ENCODE measurements at regions of chr7 and their contacts with region 1.

Region 1: DNA sequence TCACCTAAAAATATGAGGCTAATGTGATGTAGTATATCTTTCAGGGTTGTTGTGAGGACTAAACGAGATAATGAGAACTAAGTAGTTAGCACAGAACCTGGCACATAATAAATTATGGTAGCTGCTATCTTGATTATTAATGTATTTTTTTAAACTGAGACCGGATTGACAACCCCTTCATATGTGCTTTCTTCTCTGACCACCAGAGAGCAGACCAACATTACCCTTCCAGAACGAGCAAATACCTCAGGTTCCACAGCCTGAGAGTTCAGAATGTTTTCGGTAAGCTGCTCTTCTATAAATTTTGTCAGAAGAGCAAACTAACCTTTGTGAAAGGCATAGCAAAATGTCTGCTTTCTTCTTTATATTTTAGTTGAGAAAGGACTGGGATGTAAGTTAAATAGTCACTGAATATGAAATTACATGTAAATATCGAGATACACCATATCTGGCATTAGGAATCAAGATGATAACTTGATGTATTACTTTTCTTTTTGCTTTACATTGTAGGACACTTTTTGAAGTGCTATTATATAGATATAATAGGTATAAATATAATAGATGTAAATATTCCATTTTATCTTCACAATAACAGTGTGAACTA is 13.6 kb upstream of the BPGM start:
- DNase-seq: peak; percentile 44
- H3K4me3 Mint-ChIP-seq: no peak overlapping the region
- H3K27ac Mint-ChIP-seq: no peak overlapping the region
- H3K4me1 Mint-ChIP-seq: peaks cover 22% of the 10 kb centered on the region
- H3K27me3 Mint-ChIP-seq: peaks cover 2% of the 10 kb centered on the region
- CTCF ChIP-seq: peak; percentile 55

Region 2: DNA sequence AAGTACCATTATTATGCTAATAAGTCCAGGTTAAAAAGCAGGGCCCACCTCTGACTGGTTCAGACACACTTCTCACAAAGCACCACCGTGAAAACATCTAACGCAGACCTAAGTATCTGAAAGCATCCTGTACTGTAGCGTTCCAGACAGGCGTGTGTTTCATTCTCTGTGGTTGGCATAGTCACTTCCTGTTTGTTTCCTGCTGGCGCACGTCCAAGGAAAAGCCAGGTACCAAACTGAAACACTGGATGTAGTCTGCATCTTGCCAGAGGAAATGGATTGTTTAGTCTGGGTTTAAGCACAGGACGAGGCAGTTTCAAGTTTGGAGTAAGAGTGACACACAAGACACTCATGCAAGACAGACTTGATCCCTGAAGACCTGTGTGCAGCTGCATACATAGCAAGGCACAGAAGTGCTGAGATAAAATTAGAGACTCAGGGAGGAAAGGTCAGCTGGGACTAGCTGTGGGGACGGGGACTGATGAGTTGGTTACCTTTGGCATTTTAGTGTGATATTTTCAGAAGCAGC is 36.9 kb after region 1 on chr7:
- CTCF ChIA-PET with region 1: interaction called, 3 read pairs
- intact Hi-C with region 1: loop called (anchors 5 kb)
- DNase-seq: peak; percentile 76
- H3K4me3 Mint-ChIP-seq: peak overlapping the region; percentile 57
- H3K27ac Mint-ChIP-seq: peak overlapping the region; percentile 85
- H3K4me1 Mint-ChIP-seq: peaks cover 12% of the 10 kb centered on the region
- H3K27me3 Mint-ChIP-seq: no peaks in the 10 kb centered on the region
- CTCF ChIP-seq: no peak

Region 3: GRCh38 chr7:134701272-134701671 is 68.2 kb after region 1 on chr7:
- CTCF ChIA-PET with region 1: interaction called, 4 read pairs
- intact Hi-C with region 1: loop called (anchors 1 kb)
- DNase-seq: peak; percentile 29
- H3K4me3 Mint-ChIP-seq: no peak overlapping the region
- H3K27ac Mint-ChIP-seq: no peak overlapping the region
- H3K4me1 Mint-ChIP-seq: no peaks in the 10 kb centered on the region
- H3K27me3 Mint-ChIP-seq: peaks cover 15% of the 10 kb centered on the region
- CTCF ChIP-seq: peak; percentile 53

Region 4: GRCh38 chr7:134778941-134779740 is 146.1 kb after region 1 on chr7 and contains the start of gene CALD1:
- CTCF ChIA-PET with region 1: no interaction called
- intact Hi-C with region 1: no loop called
- DNase-seq: peak; percentile 58
- H3K4me3 Mint-ChIP-seq: peak within 1 kb of the TSS; percentile 68
- H3K27ac Mint-ChIP-seq: no peak within 1 kb of the TSS
- H3K4me1 Mint-ChIP-seq: peaks cover 21% of the 10 kb centered on the region
- H3K27me3 Mint-ChIP-seq: no peaks in the 10 kb centered on the region
- CTCF ChIP-seq: no peak
- total RNA-seq, gene CALD1: 5.5 and 9.3 TPM in 2 replicates

Region 5: DNA sequence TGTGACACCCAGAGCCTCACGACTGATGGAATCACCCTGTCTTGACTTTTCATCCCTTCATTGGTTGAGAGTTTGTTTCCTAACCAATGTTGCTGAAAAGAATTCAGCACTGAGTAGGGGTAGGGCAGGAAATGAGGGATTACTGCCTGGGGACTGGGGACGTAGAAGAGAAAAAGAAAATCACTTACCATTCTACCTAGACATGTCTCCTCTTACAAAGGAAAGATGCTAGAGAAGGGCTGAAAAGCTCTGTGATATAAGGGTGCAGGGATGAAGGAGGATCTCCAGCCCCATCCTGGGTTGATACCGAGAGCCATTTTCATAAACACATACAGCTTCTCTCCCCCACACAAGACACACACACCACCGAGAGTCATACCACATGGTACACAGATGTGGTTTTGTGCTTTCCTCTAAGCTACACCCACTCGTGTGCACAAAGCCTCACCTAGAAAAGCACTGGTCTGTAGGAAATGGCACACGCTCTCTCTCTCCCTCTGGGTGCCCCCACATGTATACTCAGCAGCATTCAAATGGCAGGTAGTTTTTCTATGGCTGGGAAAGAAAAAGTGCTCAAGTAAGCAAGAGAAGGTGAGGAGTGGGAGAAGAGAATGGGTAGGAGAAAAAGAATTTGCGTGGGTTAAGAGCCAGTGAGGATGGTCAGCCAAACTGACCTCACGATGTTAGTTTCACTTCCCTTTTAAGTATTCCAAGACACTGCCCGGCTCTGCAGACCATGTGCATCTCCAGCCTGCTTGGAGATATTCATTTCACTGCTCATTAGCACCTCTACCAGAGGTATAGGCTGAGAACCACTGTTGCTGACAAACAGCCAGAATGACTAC is 232.2 kb after region 1 on chr7:
- CTCF ChIA-PET with region 1: no interaction called
- intact Hi-C with region 1: loop called (anchors 10 kb)
- DNase-seq: no peak
- H3K4me3 Mint-ChIP-seq: no peak overlapping the region
- H3K27ac Mint-ChIP-seq: no peak overlapping the region
- H3K4me1 Mint-ChIP-seq: no peaks in the 10 kb centered on the region
- H3K27me3 Mint-ChIP-seq: no peaks in the 10 kb centered on the region
- CTCF ChIP-seq: no peak

Region 6: DNA sequence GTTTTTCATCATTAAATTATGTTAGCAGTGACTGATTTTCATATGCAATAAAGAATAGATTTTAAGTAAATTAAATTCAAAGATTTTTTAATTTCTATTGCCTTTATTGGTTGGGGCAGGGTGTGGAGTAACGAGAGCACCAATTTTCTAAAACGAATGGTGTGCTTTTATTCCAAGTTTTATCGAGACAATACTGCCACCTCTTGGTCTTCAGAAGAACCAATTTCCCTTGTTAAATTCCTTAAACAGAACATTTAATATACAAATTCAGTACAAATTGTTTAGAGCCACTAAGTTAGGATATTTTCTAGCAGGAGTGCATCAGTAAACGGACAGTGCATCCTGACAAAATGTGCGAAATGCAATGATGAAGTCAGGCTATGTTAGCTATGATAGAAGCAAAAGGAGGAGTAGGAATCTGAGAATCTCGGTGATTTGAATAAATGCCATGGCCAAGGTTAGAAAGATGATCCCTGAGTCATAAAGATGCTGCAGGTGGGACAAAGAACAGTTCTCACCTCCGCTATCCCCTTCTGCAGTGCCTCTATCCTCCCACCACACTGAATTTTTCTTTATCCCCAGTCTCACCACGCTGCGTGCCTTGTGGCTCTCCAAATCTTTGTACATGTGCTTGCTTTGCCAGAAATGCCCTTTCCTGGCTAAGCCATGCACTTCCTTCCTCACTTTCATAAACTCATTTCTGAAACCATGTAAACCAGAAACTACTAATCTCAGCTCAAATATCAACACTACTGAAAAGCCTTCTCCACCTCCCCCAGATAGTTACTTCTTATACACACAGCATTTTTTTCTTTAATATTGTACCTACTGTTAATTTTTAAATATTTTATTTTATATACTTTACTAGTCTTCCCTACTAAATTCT is 321.4 kb after region 1 on chr7:
- CTCF ChIA-PET with region 1: interaction called, 3 read pairs
- intact Hi-C with region 1: loop called (anchors 1 kb)
- DNase-seq: no peak
- H3K4me3 Mint-ChIP-seq: no peak overlapping the region
- H3K27ac Mint-ChIP-seq: no peak overlapping the region
- H3K4me1 Mint-ChIP-seq: no peaks in the 10 kb centered on the region
- H3K27me3 Mint-ChIP-seq: no peaks in the 10 kb centered on the region
- CTCF ChIP-seq: peak; percentile 29